Transverse colon (tissue), 4 donors: ENCODE measurements at regions of chr14 and their contacts with region 1.

Region 1: GRCh38 chr14:52015411-52016030 is 26.2 kb downstream of the RTRAF start:
- DNase-seq: no peak
- H3K4me3 ChIP-seq: no peak overlapping the region
- H3K27ac ChIP-seq: no peak overlapping the region
- H3K4me1 ChIP-seq: peaks cover 8 to 24% (median 20%) of the 10 kb centered on the region in 4 donors
- H3K27me3 ChIP-seq: no peaks in the 10 kb centered on the region
- CTCF ChIP-seq: peak in 2 of 5 experiments; percentile 10 to 25
- EP300 ChIP-seq: no peak
- POLR2A ChIP-seq: no peak

Region 2: DNA sequence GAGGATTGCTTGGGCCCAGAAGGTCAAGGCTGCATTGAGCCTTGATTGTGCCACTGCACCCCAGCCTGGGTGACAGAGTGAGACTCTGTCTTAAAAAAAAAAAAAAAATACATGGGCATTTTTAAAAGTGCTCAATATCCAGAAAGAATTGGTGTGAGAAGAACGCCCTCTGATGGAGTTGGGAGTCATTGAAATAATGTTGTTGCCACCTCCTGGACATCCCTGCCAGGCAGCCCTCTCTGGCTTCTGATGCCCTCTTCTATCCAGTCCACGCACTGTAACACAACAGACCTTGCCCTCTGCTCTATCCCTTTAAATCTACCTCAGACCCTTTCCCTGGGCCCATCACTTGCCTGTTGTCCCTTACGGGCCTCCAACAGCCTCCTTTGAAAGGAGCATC is 256.9 kb after region 1 on chr14:
- in situ Hi-C with region 1: loop called in 1 of 4 experiments (anchors 25 kb)
- intact Hi-C with region 1: no loop called
- DNase-seq: peak; percentile 48
- H3K4me3 ChIP-seq: peak overlapping the region in 1 of 4 donors; percentile 6
- H3K27ac ChIP-seq: peak overlapping the region in 1 of 4 donors; percentile 21
- H3K4me1 ChIP-seq: peaks cover 0 to 22% (median 9%) of the 10 kb centered on the region in 4 donors
- H3K27me3 ChIP-seq: peaks cover 18% of the 10 kb centered on the region
- CTCF ChIP-seq: peak; percentile 26 to 53 (median 41)
- EP300 ChIP-seq: no peak
- POLR2A ChIP-seq: no peak

Region 3: DNA sequence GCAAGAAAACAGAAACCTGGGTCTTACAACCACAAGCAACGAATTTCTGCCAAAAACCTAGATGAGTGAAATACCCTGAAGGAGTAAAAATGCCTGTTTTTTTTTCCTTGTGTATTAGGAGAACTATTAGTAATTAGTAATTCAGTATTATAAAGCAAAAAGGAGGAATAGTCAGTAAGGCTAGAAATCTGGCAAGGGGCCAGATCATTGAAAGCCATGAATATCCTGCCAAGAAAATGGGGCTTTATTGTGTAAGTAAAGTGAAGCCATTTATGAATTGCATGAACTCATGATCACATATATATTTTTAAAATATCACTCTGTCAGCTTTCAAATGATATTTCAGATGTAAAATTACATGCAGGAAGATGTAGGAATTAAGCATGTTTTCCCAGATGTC is 478.9 kb after region 1 on chr14:
- in situ Hi-C with region 1: loop called in 1 of 4 experiments (anchors 25 kb)
- intact Hi-C with region 1: no loop called
- DNase-seq: no peak
- H3K4me3 ChIP-seq: no peak overlapping the region
- H3K27ac ChIP-seq: no peak overlapping the region
- H3K4me1 ChIP-seq: no peaks in the 10 kb centered on the region
- H3K27me3 ChIP-seq: no peaks in the 10 kb centered on the region
- CTCF ChIP-seq: no peak
- EP300 ChIP-seq: no peak
- POLR2A ChIP-seq: no peak

Region 4: DNA sequence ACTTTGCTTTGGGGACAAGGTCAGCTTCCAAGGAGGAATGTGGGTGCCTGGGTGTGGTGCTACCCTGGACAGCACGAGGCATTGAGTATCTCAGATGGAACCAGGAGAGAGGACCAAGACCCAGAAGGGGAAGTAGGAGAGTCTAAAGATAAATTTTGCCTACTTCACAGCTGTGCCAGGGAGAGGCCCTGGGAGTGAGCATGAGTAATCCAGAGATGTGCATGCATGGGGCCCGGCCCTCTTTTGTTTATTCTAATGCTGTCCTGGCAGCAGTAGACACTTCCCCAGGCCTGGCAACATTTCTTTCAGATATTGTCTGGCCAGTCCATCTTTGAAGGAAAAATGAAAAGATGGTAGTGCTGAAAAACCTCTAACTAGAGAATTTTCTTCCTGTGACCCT is 825.4 kb after region 1 on chr14:
- in situ Hi-C with region 1: no loop called
- intact Hi-C with region 1: no loop called
- DNase-seq: no peak
- H3K4me3 ChIP-seq: no peak overlapping the region
- H3K27ac ChIP-seq: no peak overlapping the region
- H3K4me1 ChIP-seq: peaks cover 0 to 10% (median 6%) of the 10 kb centered on the region in 4 donors
- H3K27me3 ChIP-seq: no peaks in the 10 kb centered on the region
- CTCF ChIP-seq: no peak
- EP300 ChIP-seq: no peak
- POLR2A ChIP-seq: no peak